Heart right ventricle (tissue), 16 donors: ENCODE measurements at regions of chr7 and their contacts with region 1.

Region 1: DNA sequence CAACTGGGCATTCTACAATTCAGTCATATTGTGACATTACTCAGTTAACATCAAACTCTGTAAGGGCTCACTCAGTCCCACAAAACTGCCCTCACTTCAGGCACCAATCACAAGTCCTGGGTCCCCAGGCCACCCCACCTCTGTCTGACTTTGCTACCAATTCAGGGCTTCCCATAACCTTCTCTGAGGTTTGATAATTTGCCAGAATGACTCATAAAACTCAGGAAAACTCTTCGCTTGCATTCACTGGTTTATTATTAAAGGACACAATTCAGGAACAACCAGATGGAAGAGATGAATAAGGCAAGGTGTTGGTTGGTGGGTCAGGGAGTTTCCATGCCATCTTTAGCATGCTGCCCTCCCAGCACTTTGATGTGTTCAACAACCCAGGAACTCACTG is 41.3 kb downstream of the AVL9 start:
- DNase-seq: no peak
- ATAC-seq: peak in 3 of 8 donors; percentile 19 to 64 (median 39)
- H3K4me3 ChIP-seq: no peak overlapping the region
- H3K27ac ChIP-seq: no peak overlapping the region
- H3K4me1 ChIP-seq: peaks cover 0 to 29% (median 16%) of the 10 kb centered on the region in 9 donors
- H3K27me3 ChIP-seq: no peaks in the 10 kb centered on the region
- CTCF ChIP-seq: no peak

Region 2: GRCh38 chr7:32500922-32501341 is 35.7 kb before region 1 on chr7:
- intact Hi-C with region 1: loop called in 2 of 10 experiments (anchors 5 kb)
- DNase-seq: no peak
- ATAC-seq: peak in 4 of 8 donors; percentile 30 to 80 (median 44)
- H3K4me3 ChIP-seq: no peak overlapping the region
- H3K27ac ChIP-seq: peak overlapping the region in 5 of 10 donors; percentile 14 to 62 (median 51)
- H3K4me1 ChIP-seq: peaks cover 0 to 55% (median 41%) of the 10 kb centered on the region in 9 donors
- H3K27me3 ChIP-seq: no peaks in the 10 kb centered on the region
- CTCF ChIP-seq: no peak